ENCODE measurements at regions of chr1 and their contacts with region 1.

Region 1: DNA sequence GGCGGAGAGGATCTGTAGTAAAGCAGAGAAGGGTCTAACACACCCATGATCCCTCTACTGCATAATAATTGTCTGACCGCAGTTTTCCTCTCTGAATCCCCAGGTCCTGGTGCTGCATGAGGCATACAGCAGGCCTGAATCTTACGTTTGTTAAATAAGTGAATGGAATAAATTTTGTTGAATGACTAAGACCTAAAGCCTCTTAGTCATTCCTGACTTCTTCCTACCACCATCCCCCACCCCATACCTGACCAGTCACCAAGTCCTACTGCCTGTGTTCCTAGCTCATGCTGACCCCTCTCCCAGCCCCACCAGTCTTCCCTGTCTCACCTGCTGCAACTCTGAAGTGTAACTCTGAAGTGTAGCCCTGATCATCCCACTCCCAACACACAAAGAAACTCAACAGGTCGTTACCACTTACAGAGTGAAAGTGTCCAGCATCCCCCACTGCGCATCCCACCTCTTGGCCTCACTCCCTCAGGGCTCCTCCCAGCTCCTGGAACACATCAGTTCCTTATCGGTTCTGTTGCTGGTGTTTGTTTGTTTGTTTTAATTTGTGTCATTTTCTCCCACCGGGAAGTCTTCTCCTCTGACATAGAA is 9.7 kb downstream of the GJA5 start:
- DNase-seq: no peak
- H3K4me3 ChIP-seq: no peak overlapping the region
- H3K27ac ChIP-seq: no peak overlapping the region
- H3K4me1 ChIP-seq: no peaks in the 10 kb centered on the region
- CTCF ChIP-seq: no peak

Region 2: DNA sequence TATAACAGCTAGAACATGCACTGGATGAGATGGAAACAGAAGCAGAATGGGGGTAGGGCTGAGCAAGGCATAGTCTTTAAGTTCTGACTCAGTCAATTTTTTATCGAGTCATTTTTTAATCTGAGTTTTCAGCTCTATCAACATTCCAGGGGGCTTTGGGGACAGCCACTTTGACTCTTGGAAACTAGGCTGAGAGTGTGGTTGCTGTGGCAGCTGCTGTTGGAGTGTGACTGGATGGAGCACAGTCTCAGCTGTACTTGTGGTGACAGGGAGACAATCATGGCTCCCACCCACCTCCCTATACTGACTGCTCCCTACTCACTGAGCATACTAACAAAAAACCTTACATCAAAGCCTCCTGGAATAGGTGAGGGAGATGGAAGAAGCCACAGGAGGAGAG is 15.3 kb before region 1 on chr1:
- CTCF ChIA-PET with region 1: no interaction called
- POLR2A ChIA-PET with region 1: no interaction called
- intact Hi-C with region 1: loop called (anchors 1 kb)
- DNase-seq: no peak
- H3K4me3 ChIP-seq: no peak overlapping the region
- H3K27ac ChIP-seq: no peak overlapping the region
- H3K4me1 ChIP-seq: no peaks in the 10 kb centered on the region
- CTCF ChIP-seq: no peak